ENCODE measurements at regions of chr17 and their contacts with region 1.

Region 1: DNA sequence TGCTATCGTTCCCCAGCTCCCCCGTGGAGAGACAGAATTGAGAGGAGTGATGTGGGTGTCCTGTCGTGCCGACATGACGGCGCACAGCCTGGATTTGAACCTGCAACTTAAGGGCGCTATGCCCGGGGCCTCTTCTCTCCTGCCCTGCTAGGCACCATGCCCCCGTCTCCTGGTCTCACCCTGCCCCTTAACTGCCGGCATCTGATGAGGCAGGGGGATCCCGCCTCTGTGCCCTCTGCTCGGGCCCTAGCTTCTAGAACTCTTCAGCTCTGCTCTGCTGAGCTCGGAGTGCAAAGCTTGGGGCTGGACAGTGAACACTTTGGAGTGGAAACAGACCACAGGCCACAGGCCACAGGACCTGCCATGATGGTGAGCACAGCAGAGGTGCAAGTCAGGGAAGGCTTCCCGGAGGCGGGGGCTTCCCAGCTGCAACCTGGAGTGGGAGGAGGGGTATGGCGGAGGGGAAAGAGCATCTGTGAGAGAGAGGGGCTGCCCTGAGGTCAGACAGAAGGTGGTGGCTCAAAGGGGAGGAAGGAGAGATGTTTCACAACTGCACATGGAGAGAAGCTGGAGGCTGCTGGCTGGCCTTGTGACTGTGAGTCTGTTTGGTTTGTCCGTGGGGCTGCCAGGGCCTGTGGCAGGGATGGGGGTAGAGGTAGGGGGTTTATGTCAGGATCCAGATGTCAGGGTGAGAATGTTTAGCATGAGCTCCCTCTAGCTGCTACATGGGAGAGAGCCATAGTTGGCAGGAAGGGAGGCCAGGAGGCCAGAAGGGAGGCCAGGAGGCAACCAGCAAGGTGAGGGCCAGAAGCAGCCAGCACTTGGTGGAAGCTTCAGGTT is 107.8 kb downstream of the CRLF3 start:
- DNase-seq: no peak
- H3K4me3 ChIP-seq: no peak overlapping the region
- H3K27ac ChIP-seq: no peak overlapping the region
- H3K4me1 ChIP-seq: peaks cover 0 to 12% (median 7%) of the 10 kb centered on the region in 4 experiments; a peak in 6 of 7 replicates
- H3K27me3 ChIP-seq: no peaks in the 10 kb centered on the region
- CTCF ChIP-seq: peak; percentile 40 to 53 (median 46); a peak in 3 of 4 replicates
- EP300 ChIP-seq: no peak
- POLR2A ChIP-seq: no peak
- RAD21 ChIP-seq: peak; percentile 40 to 54

Region 2: GRCh38 chr17:30433514-30433913 is 283.2 kb before region 1 on chr17:
- CTCF ChIA-PET with region 1: no interaction called
- POLR2A ChIA-PET with region 1: no interaction called
- DNase-seq: no peak
- H3K4me3 ChIP-seq: no peak overlapping the region
- H3K27ac ChIP-seq: no peak overlapping the region
- H3K4me1 ChIP-seq: no peaks in the 10 kb centered on the region
- H3K27me3 ChIP-seq: no peaks in the 10 kb centered on the region
- CTCF ChIP-seq: no peak
- EP300 ChIP-seq: no peak
- POLR2A ChIP-seq: no peak
- RAD21 ChIP-seq: no peak

Region 3: DNA sequence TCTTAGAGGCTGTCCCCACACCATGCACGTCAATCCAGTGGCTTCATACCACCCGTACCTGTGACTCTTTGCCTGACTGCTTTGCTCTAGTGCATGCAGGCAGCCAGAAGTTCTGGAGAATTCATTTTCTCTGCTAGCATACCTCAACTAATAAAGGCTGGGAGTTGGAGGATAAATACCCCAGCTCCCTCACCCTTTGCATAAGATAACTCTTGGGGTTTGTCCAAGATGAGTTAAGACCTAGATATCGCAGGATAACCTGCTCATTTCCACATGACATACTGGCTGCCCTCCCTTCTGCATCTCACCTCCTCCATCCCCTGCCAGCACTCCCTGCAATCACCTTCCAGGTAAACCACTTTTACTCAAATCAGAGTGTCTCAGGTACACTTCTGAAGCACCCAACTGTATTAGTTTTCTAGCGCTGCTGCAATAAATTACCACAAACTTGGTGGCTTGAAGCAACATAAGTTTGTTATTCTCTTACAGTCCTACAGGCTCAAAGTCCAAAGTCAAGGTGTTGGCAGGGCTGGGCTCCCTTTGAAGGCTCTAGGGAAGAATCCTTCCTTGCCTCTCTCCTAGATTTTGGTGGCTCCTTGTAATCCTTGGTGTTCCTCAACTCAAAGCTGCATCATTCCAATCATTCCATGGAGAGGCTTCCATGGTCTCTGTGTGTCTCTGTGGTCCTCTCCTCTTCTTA is 39.0 kb before region 1 on chr17:
- CTCF ChIA-PET with region 1: no interaction called
- POLR2A ChIA-PET with region 1: interaction called, 11 read pairs
- DNase-seq: no peak
- H3K4me3 ChIP-seq: no peak overlapping the region
- H3K27ac ChIP-seq: no peak overlapping the region
- H3K4me1 ChIP-seq: no peaks in the 10 kb centered on the region
- H3K27me3 ChIP-seq: no peaks in the 10 kb centered on the region
- CTCF ChIP-seq: no peak
- EP300 ChIP-seq: no peak
- POLR2A ChIP-seq: no peak
- RAD21 ChIP-seq: no peak

Region 4: GRCh38 chr17:30696234-30696633 is 20.4 kb before region 1 on chr17:
- CTCF ChIA-PET with region 1: interaction called, 16 read pairs
- POLR2A ChIA-PET with region 1: no interaction called
- DNase-seq: no peak
- H3K4me3 ChIP-seq: no peak overlapping the region
- H3K27ac ChIP-seq: no peak overlapping the region
- H3K4me1 ChIP-seq: peaks cover 0 to 2% (median 0%) of the 10 kb centered on the region in 4 experiments; a peak in 2 of 7 replicates
- H3K27me3 ChIP-seq: peaks cover 0 to 3% (median under 1%) of the 10 kb centered on the region in 4 experiments; a peak in 1 of 7 replicates
- CTCF ChIP-seq: no peak
- EP300 ChIP-seq: no peak
- POLR2A ChIP-seq: no peak
- RAD21 ChIP-seq: no peak

Region 5: DNA sequence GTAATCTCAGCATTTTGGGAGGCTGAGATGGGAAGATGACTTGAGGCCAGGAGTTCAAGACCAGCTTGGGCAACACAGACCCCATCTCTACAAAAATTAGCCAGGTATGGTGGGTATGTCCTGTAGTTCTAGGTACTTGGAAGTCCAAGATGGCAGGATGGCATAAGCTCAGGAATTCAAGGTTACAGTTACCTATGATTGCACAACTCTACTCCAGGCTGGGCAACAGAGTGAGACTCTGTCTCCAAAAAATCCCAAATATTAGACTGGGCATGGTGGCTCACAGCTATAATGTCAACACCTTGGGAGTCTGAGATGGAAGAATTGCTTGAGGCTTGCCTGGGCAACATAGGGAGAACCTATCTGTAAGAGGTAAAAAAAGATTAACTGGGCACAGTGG is 44.4 kb after region 1 on chr17:
- CTCF ChIA-PET with region 1: no interaction called
- POLR2A ChIA-PET with region 1: no interaction called
- DNase-seq: no peak
- H3K4me3 ChIP-seq: no peak overlapping the region
- H3K27ac ChIP-seq: no peak overlapping the region
- H3K4me1 ChIP-seq: no peaks in the 10 kb centered on the region
- H3K27me3 ChIP-seq: no peaks in the 10 kb centered on the region
- CTCF ChIP-seq: no peak
- EP300 ChIP-seq: no peak
- POLR2A ChIP-seq: no peak
- RAD21 ChIP-seq: no peak

Region 6: DNA sequence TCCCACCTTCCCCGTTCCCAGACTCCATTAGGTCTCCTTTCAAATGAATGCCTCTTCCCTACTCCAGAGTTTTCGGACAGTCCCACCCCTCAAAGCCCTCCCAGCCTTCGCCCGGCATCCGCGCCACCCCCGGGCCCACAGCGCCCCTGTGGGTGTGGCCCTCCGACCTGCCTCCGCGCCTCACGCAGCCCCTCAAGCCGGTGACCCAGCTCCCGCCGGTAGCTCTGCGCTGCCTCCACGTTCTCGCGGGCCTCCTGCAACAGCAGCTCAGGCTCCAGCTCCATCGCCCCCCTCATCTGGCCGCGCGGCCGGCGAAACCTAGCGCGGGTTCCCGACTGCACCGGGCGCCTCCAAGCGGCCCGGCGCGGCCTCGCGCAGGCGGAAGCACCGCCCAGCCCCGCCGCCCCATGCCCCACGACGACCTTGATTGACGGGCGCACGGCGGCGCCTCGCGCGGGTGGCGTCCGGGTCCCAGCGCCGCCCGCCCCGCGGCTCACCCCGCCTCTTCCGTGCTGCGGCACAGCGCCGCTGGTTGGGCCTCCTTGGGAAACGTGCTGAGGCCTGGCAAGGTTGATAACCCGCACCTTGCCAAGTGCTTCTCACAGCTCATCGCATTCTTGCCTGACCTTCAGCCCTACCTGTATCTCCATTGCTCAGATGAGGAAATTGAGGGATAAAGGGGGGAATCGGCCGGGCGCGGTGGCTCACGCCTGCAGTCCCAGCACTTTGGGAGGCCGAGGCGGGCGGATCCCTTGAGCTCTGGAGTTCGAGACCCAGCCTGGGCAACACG is 107.9 kb after region 1 on chr17 and contains the start of gene CRLF3:
- CTCF ChIA-PET with region 1: no interaction called
- POLR2A ChIA-PET with region 1: no interaction called
- DNase-seq: peak; percentile 62 to 93
- H3K4me3 ChIP-seq: peak within 1 kb of the TSS; percentile 69 to 88 (median 82)
- H3K27ac ChIP-seq: peak within 1 kb of the TSS; percentile 77; the same call in 1 of the 2 replicates
- H3K4me1 ChIP-seq: peaks cover 0 to 3% (median 3%) of the 10 kb centered on the region in 4 experiments; a peak in 4 of 7 replicates
- H3K27me3 ChIP-seq: no peaks in the 10 kb centered on the region
- CTCF ChIP-seq: peak; percentile 29 to 41 (median 33)
- EP300 ChIP-seq: 0 out of 3 replicates have a peak, but pooled peaks of 1 of the 2 experiments have one; percentile 26
- POLR2A ChIP-seq: peak; percentile 84 to 90
- RAD21 ChIP-seq: peak; percentile 17 to 50; a peak in 3 of 4 replicates
- total RNA-seq, gene CRLF3: 21.0 and 22.7 TPM in 2 replicates

Measured in H1 (cell line).